ENCODE measurements at regions of chr11 and their contacts with region 1.

Region 1: DNA sequence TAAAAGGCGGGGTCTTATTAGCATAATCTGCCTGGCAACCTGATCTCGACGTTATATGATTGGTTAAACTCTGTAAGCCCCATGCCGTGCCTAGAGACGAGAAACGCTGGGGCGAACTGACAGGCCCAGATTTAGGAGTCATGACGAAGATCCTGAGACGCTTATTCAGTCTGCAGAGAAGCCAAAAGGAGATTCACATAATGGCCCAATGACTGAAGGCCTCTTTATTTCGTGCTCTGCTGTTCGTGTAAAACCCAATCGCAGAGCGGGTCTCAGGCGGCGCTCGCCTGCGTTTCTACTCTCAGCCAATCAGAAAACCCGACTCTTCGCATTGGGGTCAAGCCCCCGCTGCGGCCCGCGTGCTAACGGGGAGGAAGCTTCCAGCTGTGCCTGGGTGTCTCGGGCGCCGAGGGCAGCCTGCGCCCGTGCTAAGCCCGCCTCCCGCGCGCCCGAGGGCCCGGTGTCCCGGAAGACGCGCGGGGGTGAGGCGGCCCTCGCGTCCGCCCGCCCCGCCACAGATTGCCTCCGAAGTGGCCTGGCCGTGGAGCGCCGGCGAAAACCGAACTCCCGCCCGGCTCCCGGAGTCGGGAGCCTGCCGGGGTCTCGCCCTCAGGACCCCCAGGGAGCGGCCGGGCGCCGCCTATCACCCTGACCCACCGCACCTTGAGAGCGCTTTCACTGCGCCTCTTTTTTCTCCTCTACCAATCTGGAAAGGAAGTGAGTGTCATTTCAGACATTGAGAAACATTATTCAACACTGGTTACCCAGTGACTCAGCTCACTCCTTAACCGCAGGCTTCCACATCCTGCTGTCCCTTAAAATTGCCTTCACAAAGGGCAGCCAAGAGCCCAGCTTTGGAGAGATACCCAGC is 446 bp upstream of the PRDM10 start:
- DNase-seq: peak; percentile 99
- H3K4me3 ChIP-seq: peak overlapping the region; percentile 60
- H3K4me3 Mint-ChIP-seq: peak overlapping the region; percentile 97
- H3K27ac Mint-ChIP-seq: peak overlapping the region; percentile 100
- H3K4me1 ChIP-seq: peaks cover 43% of the 10 kb centered on the region
- H3K4me1 Mint-ChIP-seq: peaks cover 35% of the 10 kb centered on the region
- H3K27me3 ChIP-seq: no peaks in the 10 kb centered on the region
- H3K27me3 Mint-ChIP-seq: no peaks in the 10 kb centered on the region
- CTCF ChIP-seq: no peak

Region 2: GRCh38 chr11:129323896-129324512 is 679.1 kb before region 1 on chr11:
- CTCF ChIA-PET with region 1: no interaction called
- POLR2A ChIA-PET with region 1: no interaction called
- intact Hi-C with region 1: no loop called
- DNase-seq: peak; percentile 63 to 75
- H3K4me3 ChIP-seq: no peak overlapping the region
- H3K4me3 Mint-ChIP-seq: peak overlapping the region; percentile 49
- H3K27ac Mint-ChIP-seq: peak overlapping the region; percentile 66
- H3K4me1 ChIP-seq: peaks cover 40% of the 10 kb centered on the region
- H3K4me1 Mint-ChIP-seq: peaks cover 62% of the 10 kb centered on the region
- H3K27me3 ChIP-seq: no peaks in the 10 kb centered on the region
- H3K27me3 Mint-ChIP-seq: no peaks in the 10 kb centered on the region
- CTCF ChIP-seq: no peak

Region 3: DNA sequence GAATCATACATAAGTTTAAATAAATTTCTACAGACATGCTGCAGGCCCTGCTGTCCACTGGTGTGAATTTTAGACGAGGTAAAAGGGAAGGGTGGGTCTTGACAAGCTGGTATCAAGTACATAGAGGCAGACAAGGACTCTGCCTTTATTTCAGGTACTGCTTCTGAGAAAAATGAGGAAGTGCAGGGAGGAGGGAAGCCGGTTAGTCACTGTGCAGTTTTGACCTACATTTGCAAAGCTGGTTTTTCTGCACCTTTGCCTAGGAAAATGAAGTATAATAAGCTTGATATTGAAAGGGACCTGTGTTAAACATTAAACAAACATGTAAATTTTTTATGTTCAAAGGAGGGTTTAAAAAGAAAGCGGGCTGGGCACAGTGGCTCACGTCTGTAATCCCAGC is 162.8 kb before region 1 on chr11:
- CTCF ChIA-PET with region 1: interaction called, 13 read pairs
- POLR2A ChIA-PET with region 1: no interaction called
- intact Hi-C with region 1: no loop called
- DNase-seq: peak in 1 of 2 experiments; percentile 9
- H3K4me3 ChIP-seq: no peak overlapping the region
- H3K4me3 Mint-ChIP-seq: no peak overlapping the region
- H3K27ac Mint-ChIP-seq: no peak overlapping the region
- H3K4me1 ChIP-seq: peaks cover 8% of the 10 kb centered on the region
- H3K4me1 Mint-ChIP-seq: peaks cover 26% of the 10 kb centered on the region
- H3K27me3 ChIP-seq: no peaks in the 10 kb centered on the region
- H3K27me3 Mint-ChIP-seq: no peaks in the 10 kb centered on the region
- CTCF ChIP-seq: no peak

Region 4: GRCh38 chr11:129947474-129947873 is 55.6 kb before region 1 on chr11:
- CTCF ChIA-PET with region 1: interaction called, 3 read pairs
- POLR2A ChIA-PET with region 1: interaction called, 3 read pairs
- intact Hi-C with region 1: loop called (anchors 1 kb)
- DNase-seq: peak in 1 of 2 experiments; percentile 59
- H3K4me3 ChIP-seq: no peak overlapping the region
- H3K4me3 Mint-ChIP-seq: no peak overlapping the region
- H3K27ac Mint-ChIP-seq: peak overlapping the region; percentile 72
- H3K4me1 ChIP-seq: peaks cover 21% of the 10 kb centered on the region
- H3K4me1 Mint-ChIP-seq: peaks cover 56% of the 10 kb centered on the region
- H3K27me3 ChIP-seq: no peaks in the 10 kb centered on the region
- H3K27me3 Mint-ChIP-seq: no peaks in the 10 kb centered on the region
- CTCF ChIP-seq: peak in 1 of 2 experiments; percentile 65

Region 5: GRCh38 chr11:130029137-130029536 is 26.1 kb after region 1 on chr11:
- CTCF ChIA-PET with region 1: interaction called, 13 read pairs
- POLR2A ChIA-PET with region 1: interaction called, 31 read pairs
- intact Hi-C with region 1: loop called (anchors 1 kb)
- DNase-seq: no peak
- H3K4me3 ChIP-seq: no peak overlapping the region
- H3K4me3 Mint-ChIP-seq: peak overlapping the region; percentile 10
- H3K27ac Mint-ChIP-seq: peak overlapping the region; percentile 53
- H3K4me1 ChIP-seq: peaks cover 66% of the 10 kb centered on the region
- H3K4me1 Mint-ChIP-seq: peaks cover 47% of the 10 kb centered on the region
- H3K27me3 ChIP-seq: no peaks in the 10 kb centered on the region
- H3K27me3 Mint-ChIP-seq: no peaks in the 10 kb centered on the region
- CTCF ChIP-seq: no peak

Region 6: DNA sequence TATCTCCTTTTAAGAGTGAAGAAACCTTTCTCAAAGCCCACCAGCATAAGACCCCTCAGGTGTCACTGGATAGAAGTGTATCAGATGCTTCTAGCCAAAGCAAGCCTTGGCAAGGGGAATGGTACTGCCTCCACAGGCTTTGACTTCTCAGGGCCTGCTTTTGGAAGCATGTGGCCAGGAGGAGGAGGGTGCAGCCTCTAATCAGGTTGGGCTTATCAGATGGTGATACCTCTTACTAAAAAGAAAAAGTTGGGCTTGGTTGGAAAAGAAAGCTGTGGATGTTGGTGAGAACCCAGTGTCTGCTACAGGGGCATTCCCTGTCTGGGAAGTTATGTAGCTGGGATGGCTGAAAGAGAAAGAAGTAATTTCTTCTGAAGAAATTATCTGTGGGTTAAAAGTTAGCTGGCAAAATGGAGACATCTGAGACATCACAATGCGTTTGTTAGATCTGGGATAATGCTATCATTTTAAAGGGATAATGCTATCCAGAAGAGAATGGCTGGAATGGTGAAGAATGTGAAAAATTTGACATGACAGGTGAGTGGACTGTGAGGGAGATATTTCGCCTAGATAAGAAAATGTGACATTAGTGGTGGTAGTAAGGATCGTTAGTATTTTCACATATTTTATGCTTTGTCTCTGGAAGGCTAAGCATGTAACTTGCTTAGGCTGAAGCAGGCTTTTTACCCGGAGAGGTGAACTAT is 73.8 kb after region 1 on chr11:
- CTCF ChIA-PET with region 1: no interaction called
- POLR2A ChIA-PET with region 1: interaction called, 97 read pairs
- intact Hi-C with region 1: loop called (anchors 2 kb)
- DNase-seq: peak; percentile 67 to 75
- H3K4me3 ChIP-seq: no peak overlapping the region
- H3K4me3 Mint-ChIP-seq: peak overlapping the region; percentile 48
- H3K27ac Mint-ChIP-seq: peak overlapping the region; percentile 84
- H3K4me1 ChIP-seq: peaks cover 80% of the 10 kb centered on the region
- H3K4me1 Mint-ChIP-seq: peaks cover 41% of the 10 kb centered on the region
- H3K27me3 ChIP-seq: no peaks in the 10 kb centered on the region
- H3K27me3 Mint-ChIP-seq: no peaks in the 10 kb centered on the region
- CTCF ChIP-seq: no peak

Region 7: GRCh38 chr11:130181295-130182272 is 178.5 kb after region 1 on chr11:
- CTCF ChIA-PET with region 1: interaction called, 4 read pairs
- POLR2A ChIA-PET with region 1: interaction called, 7 read pairs
- intact Hi-C with region 1: loop called (anchors 1 kb)
- DNase-seq: peak; percentile 94 to 99
- H3K4me3 ChIP-seq: peak overlapping the region; percentile 32
- H3K4me3 Mint-ChIP-seq: peak overlapping the region; percentile 58
- H3K27ac Mint-ChIP-seq: peak overlapping the region; percentile 92
- H3K4me1 ChIP-seq: peaks cover 56% of the 10 kb centered on the region
- H3K4me1 Mint-ChIP-seq: peaks cover 56% of the 10 kb centered on the region
- H3K27me3 ChIP-seq: no peaks in the 10 kb centered on the region
- H3K27me3 Mint-ChIP-seq: no peaks in the 10 kb centered on the region
- CTCF ChIP-seq: peak in 1 of 2 experiments; percentile 8